ENCODE measurements at regions of chr6 and their contacts with region 1.

Region 1: GRCh38 chr6:116100419-116101301 is at the start of gene NT5DC1:
- DNase-seq: peak; percentile 87 to 90
- ATAC-seq: peak; percentile 95 to 96 (median 96)
- H3K4me3 ChIP-seq: peak within 1 kb of the TSS; percentile 87
- H3K27ac ChIP-seq: peak within 1 kb of the TSS; percentile 95
- H3K4me1 ChIP-seq: peaks cover 46% of the 10 kb centered on the region
- H3K27me3 ChIP-seq: no peaks in the 10 kb centered on the region
- CTCF ChIP-seq: peak; percentile 54
- total RNA-seq, gene NT5DC1: 26.7 to 30.9 (median 27.8) TPM

Region 2: DNA sequence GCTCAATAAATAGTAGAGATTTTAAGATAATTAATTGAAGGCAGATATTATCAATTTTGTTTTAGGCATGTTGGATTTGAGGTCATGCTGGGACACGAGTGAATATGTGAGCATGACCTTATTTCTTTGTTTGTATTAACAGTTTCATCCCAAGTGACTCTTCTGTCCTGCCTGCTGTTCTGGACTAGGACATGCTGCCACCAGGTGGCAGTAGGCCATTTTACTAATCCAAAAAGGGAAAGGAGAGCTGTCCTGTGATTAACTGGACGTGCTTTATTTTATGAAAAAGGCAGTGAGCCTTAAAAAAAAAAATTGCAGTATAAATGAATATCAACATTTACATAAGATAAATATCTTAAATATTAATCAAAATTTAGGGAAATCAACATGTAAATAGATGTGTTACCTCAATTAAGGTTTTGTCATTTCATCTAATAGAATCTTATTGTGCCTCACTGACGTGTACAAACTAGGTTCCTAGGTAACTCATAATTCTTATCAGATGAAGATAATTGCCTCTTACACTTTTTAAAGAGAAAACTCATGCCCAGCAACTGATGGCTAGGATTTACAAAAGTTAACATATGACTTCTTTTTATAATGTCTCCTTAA is 89.8 kb before region 1 on chr6:
- intact Hi-C with region 1: loop called (anchors 2 to 5 kb)
- DNase-seq: peak; percentile 66 to 72
- ATAC-seq: peak; percentile 71 to 87 (median 78)
- H3K4me3 ChIP-seq: no peak overlapping the region
- H3K27ac ChIP-seq: no peak overlapping the region
- H3K4me1 ChIP-seq: no peaks in the 10 kb centered on the region
- H3K27me3 ChIP-seq: no peaks in the 10 kb centered on the region
- CTCF ChIP-seq: peak; percentile 89

Region 3: DNA sequence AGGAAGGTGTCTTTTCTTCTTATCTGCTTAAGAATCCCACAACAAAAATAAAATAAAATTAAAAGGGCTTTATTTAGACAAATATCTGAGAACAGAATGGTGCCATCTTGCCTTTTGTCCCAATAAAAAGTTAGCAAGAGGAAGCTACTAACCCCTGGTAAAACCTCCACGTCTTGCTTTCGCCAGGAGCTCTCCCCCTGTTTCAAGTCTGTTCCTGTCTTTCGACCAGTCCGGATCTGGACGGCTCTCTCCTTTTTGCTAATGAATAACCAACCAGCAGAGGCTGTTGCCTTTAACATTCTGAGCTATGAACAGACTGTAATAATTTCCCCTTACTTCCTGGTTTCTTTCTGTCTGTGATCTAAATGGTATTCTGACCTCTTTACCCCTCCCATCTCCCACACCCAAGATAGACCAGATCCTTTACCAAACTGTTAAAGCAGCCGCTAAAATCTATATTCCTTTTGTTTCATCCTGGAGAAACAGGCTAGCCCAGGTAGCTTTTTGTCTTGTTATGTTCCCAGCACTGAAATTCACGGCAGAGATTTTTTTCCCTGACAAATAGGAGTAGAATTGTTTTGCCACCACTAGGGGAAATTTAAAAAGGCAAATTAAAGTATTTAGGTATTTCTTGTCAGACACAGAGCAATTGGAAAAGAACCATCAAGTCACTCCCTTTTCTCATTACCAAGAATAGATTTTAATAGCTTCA is 39.9 kb before region 1 on chr6 and contains the start of gene FRK:
- intact Hi-C with region 1: loop called in 1 of 2 experiments (anchors 5 kb)
- DNase-seq: peak in 1 of 2 donors; percentile 17
- ATAC-seq: peak; percentile 66 to 79 (median 71)
- H3K4me3 ChIP-seq: peak within 1 kb of the TSS; percentile 68
- H3K27ac ChIP-seq: peak within 1 kb of the TSS; percentile 85
- H3K4me1 ChIP-seq: peaks cover 3% of the 10 kb centered on the region
- H3K27me3 ChIP-seq: no peaks in the 10 kb centered on the region
- CTCF ChIP-seq: peak; percentile 31
- total RNA-seq, gene FRK: 1.4 to 4.2 (median 1.8) TPM